PC-9 (cell line): ENCODE measurements at regions of chr5 and their contacts with region 1.

Region 1: DNA sequence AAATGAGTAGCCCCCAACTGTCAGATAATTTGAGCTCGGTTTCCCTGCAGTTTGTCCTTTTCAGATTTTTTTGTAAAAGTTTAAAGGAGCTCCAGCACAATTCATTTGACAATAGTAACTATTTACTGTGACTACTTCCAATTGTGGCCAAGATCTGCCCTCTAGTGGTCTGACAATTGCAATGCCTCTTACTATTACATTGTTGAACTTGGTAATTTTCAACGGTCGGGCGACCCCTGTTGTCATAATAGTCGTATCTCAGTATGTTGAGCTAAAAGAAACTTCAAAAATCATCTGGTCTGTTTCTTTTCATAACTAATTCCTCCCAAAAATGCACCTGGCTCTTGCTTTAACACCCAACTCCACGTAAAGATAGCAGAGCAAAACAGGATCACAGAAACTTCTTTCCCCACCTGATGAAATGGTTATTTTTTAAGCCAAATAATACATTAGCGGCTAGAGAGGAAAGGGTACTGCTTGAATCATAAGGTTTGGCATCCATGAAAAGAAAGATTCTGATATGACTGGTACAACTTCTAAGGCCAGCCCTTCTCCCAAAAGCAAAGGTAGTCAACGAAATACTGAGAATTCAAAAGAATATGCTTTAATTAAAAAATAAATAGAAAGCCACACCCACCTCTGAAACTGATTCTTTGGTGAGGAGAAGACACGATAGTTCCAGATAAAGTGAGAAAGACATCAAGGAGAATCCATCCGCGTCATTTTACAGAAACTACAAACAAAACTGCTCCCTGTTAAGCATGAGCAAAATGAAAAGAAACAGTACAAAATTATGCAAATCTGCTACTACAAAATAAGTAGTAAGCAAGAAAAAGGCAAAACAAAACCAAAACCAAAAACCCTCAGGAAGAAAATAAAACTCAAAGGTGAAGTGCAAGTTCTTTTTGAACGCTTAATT is 76.9 kb upstream of the HTR4 start:
- DNase-seq: peak; percentile 65 to 69
- H3K4me3 ChIP-seq: no peak overlapping the region
- H3K27ac ChIP-seq: no peak overlapping the region
- H3K4me1 ChIP-seq: peaks cover 27% of the 10 kb centered on the region
- H3K27me3 ChIP-seq: no peaks in the 10 kb centered on the region
- CTCF ChIP-seq: peak; percentile 95

Region 2: GRCh38 chr5:147857302-147858129 is 873.7 kb before region 1 on chr5:
- CTCF ChIA-PET with region 1: interaction called, 6 read pairs
- POLR2A ChIA-PET with region 1: no interaction called
- intact Hi-C with region 1: loop called (anchors 1 kb)
- DNase-seq: peak; percentile 39 to 51
- H3K4me3 ChIP-seq: no peak overlapping the region
- H3K27ac ChIP-seq: no peak overlapping the region
- H3K4me1 ChIP-seq: no peaks in the 10 kb centered on the region
- H3K27me3 ChIP-seq: no peaks in the 10 kb centered on the region
- CTCF ChIP-seq: peak; percentile 89

Region 3: DNA sequence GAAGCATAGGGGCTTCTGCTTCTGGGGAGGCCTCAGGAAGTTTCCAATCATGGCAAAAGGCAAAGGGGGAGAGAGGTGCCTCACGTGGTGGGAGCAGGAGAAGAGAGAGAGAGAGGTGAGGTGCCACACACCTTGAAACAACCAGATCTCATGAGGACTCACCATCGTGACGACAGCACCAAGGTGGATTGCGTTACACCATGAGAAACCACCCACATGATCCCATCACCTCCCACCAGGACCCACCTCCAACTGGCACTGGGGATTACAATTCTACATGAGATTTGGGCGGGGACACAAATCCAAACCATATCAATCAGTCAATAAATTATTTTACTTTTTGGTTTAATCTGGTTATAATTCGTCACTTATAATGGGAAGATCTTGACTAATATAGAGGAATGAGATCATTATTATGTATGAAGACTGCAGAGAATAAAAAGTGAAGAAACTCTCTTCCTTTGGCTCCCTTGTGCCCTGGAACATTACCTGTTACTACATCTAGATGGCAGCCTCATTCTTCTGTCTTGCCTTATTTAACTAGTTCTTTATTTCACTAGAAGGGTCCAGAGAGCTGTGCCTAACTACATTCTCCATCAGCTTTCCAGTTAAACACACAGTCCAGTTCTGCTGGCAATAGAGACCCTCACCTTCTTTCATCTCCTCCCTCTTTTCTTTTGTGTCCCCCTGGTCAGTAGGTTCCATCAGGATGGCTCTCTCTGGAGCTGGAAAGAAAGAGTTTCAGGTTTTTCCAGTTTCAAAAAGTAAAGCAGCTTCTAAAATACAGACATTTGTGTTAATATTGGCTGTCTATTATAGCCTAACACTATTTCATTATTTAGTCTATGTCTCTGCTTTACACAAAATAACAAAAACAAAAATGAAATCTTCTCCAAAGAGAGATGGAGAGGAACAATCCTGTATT is 440.7 kb before region 1 on chr5:
- CTCF ChIA-PET with region 1: interaction called, 3 read pairs
- POLR2A ChIA-PET with region 1: no interaction called
- intact Hi-C with region 1: loop called (anchors 2 kb)
- DNase-seq: no peak
- H3K4me3 ChIP-seq: no peak overlapping the region
- H3K27ac ChIP-seq: no peak overlapping the region
- H3K4me1 ChIP-seq: no peaks in the 10 kb centered on the region
- H3K27me3 ChIP-seq: no peaks in the 10 kb centered on the region
- CTCF ChIP-seq: peak; percentile 68

Region 4: GRCh38 chr5:148641735-148642134 is 89.5 kb before region 1 on chr5:
- CTCF ChIA-PET with region 1: no interaction called
- POLR2A ChIA-PET with region 1: no interaction called
- intact Hi-C with region 1: no loop called
- DNase-seq: no peak
- H3K4me3 ChIP-seq: no peak overlapping the region
- H3K27ac ChIP-seq: no peak overlapping the region
- H3K4me1 ChIP-seq: no peaks in the 10 kb centered on the region
- H3K27me3 ChIP-seq: no peaks in the 10 kb centered on the region
- CTCF ChIP-seq: no peak

Region 5: GRCh38 chr5:148746826-148747535 is 15.8 kb after region 1 on chr5:
- CTCF ChIA-PET with region 1: no interaction called
- POLR2A ChIA-PET with region 1: no interaction called
- intact Hi-C with region 1: no loop called
- DNase-seq: no peak
- H3K4me3 ChIP-seq: no peak overlapping the region
- H3K27ac ChIP-seq: no peak overlapping the region
- H3K4me1 ChIP-seq: no peaks in the 10 kb centered on the region
- H3K27me3 ChIP-seq: no peaks in the 10 kb centered on the region
- CTCF ChIP-seq: no peak

Region 6: DNA sequence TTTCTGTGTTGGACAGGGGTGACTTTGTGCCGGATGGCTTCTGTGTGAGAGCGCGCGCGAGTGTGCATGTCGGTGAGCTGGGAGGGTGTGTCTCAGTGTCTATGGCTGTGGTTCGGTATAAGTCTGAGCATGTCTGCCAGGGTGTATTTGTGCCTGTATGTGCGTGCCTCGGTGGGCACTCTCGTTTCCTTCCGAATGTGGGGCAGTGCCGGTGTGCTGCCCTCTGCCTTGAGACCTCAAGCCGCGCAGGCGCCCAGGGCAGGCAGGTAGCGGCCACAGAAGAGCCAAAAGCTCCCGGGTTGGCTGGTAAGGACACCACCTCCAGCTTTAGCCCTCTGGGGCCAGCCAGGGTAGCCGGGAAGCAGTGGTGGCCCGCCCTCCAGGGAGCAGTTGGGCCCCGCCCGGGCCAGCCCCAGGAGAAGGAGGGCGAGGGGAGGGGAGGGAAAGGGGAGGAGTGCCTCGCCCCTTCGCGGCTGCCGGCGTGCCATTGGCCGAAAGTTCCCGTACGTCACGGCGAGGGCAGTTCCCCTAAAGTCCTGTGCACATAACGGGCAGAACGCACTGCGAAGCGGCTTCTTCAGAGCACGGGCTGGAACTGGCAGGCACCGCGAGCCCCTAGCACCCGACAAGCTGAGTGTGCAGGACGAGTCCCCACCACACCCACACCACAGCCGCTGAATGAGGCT is 95.0 kb after region 1 on chr5 and contains the start of gene ADRB2:
- CTCF ChIA-PET with region 1: interaction called, 5 read pairs
- POLR2A ChIA-PET with region 1: no interaction called
- intact Hi-C with region 1: loop called (anchors 2 kb)
- DNase-seq: peak; percentile 90 to 98
- H3K4me3 ChIP-seq: peak within 1 kb of the TSS; percentile 63
- H3K27ac ChIP-seq: peak within 1 kb of the TSS; percentile 68
- H3K4me1 ChIP-seq: peaks cover 24% of the 10 kb centered on the region
- H3K27me3 ChIP-seq: no peaks in the 10 kb centered on the region
- CTCF ChIP-seq: no peak
- total RNA-seq, gene ADRB2: 2.8 and 3.1 TPM in 2 replicates

Region 7: DNA sequence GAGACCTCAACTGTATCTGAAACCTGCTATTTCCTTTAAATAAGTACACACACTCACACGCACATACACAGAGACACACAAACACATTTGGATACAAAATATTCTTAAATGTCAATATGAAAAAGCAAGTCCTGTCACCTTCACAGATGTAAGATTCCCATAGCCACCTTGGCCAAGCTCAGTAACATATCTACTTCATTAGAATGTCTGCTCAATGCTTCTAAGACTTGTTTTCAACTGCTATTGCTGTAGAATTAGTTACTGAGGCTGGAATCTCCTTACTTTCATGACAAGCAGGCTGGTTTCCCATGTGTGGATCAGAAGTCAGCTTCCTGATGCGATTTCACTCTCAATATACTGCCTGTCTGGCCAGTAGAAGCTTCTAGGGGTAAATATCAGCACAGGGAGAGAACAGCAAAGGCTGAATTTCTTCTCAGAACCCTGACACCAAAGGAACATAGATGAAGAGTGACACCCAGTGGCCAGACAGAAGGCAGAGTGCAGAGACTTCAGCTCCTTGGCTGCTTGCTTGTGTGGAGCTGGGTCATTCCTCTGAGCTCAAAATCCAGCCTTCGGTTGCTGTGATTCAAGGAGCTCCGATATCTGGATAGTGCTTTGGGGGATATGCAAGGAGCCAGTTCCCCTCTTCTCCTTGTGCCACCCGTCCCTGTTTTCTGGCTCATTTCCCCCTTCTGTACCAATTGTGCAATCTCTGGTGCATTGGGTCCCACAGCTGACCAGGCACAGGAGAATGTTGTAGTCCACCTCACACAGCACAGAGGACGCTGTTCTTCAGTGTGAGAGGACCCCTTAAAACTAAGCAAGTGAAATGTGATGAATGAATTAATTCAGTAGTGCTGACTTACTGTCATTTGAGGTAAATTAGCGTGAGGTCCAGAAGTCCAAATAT is 383.5 kb after region 1 on chr5:
- CTCF ChIA-PET with region 1: interaction called, 20 read pairs
- POLR2A ChIA-PET with region 1: no interaction called
- intact Hi-C with region 1: loop called (anchors 1 kb)
- DNase-seq: peak; percentile 74 to 82
- H3K4me3 ChIP-seq: peak overlapping the region; percentile 22; the same call in 1 of the 2 replicates
- H3K27ac ChIP-seq: peak overlapping the region; percentile 92
- H3K4me1 ChIP-seq: peaks cover 66% of the 10 kb centered on the region
- H3K27me3 ChIP-seq: no peaks in the 10 kb centered on the region
- CTCF ChIP-seq: peak; percentile 90

Region 8: GRCh38 chr5:149367249-149367971 is 636.2 kb after region 1 on chr5:
- CTCF ChIA-PET with region 1: no interaction called
- POLR2A ChIA-PET with region 1: no interaction called
- intact Hi-C with region 1: loop called (anchors 2 kb)
- DNase-seq: peak; percentile 64 to 76
- H3K4me3 ChIP-seq: no peak overlapping the region
- H3K27ac ChIP-seq: no peak overlapping the region
- H3K4me1 ChIP-seq: no peaks in the 10 kb centered on the region
- H3K27me3 ChIP-seq: no peaks in the 10 kb centered on the region
- CTCF ChIP-seq: peak; percentile 84